PC-9 (cell line): ENCODE measurements at regions of chr13 and their contacts with region 1.

Region 1: GRCh38 chr13:79480954-79481684 is at the start of gene NDFIP2:
- DNase-seq: peak; percentile 86 to 94
- H3K4me3 ChIP-seq: peak within 1 kb of the TSS; percentile 91
- H3K27ac ChIP-seq: peak within 1 kb of the TSS; percentile 81
- H3K4me1 ChIP-seq: peaks cover 44% of the 10 kb centered on the region
- H3K27me3 ChIP-seq: no peaks in the 10 kb centered on the region
- CTCF ChIP-seq: no peak
- total RNA-seq, gene NDFIP2: 47.9 and 48.4 TPM in 2 replicates

Region 2: DNA sequence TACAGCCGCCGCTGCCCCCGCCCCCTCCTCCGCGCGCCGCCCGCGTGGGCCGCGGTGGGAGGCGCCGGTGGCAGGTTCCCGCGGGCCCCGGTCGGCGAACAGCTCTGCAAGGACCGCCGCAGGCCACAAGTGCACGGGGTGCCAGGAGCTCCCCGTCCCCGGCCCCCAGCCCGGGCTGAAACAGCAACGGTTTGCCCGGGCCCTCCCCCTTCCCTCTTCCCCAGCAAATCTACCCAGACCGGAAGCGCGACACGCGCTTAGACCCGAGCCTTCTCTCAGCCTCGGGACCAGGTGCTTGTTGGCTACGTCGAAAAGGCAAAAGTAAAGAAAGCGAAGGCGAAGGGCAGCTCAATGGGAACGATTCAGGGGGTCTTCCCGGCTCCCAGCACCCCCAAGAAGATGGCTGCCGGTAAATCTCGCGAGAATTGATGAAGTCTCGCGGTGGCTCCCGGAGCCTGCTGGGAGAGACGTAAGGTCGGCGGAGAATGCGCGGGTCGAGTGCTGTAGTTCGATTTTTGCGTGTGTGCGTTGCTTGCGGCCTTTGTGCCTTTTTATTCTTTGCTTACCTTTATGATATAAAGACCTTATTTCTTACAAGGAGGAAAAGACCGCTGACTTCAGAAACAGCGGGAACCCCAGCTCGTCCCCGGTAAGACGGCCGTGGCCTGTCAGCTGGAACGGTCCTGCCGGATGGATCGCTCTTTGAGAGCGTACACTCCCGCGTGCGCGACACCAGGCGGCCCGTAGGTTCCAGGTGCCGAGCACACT is 75.1 kb before region 1 on chr13 and contains the start of gene RBM26:
- CTCF ChIA-PET with region 1: no interaction called
- POLR2A ChIA-PET with region 1: no interaction called
- intact Hi-C with region 1: loop called (anchors 5 kb)
- DNase-seq: peak; percentile 81 to 89
- H3K4me3 ChIP-seq: peak within 1 kb of the TSS; percentile 90
- H3K27ac ChIP-seq: peak within 1 kb of the TSS; percentile 87
- H3K4me1 ChIP-seq: peaks cover 43% of the 10 kb centered on the region
- H3K27me3 ChIP-seq: no peaks in the 10 kb centered on the region
- CTCF ChIP-seq: no peak
- total RNA-seq, gene RBM26: 35.2 and 40.4 TPM in 2 replicates

Region 3: DNA sequence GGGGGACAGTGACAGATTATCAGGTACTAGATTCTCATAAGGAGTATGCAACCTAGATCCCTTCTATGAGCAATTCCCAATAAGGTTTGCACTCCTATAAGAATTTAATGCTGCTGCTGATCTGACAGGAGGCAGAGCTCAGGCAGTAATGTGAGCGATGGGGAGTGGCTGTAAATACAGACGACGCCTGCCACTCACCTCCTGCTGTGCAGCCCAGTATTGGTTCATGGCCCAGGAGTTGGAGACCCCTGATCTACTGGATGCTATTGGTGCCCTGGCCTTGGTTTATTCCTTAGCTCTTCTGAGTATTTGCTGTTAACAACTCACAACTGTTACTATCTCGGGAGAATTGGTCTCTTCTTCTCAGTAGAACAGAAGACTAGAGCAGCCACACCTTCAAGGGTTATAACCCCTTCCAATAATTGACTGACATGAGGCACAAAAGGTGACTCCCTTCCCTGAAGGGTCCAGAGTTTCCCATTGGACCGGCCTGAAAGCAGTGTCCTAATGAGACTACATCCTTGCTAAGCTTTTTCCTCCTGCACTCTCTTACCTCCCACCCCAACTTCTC is 40.1 kb before region 1 on chr13:
- CTCF ChIA-PET with region 1: no interaction called
- POLR2A ChIA-PET with region 1: interaction called, 6 read pairs
- intact Hi-C with region 1: loop called (anchors 1 kb)
- DNase-seq: no peak
- H3K4me3 ChIP-seq: no peak overlapping the region
- H3K27ac ChIP-seq: peak overlapping the region; percentile 58
- H3K4me1 ChIP-seq: peaks cover 19% of the 10 kb centered on the region
- H3K27me3 ChIP-seq: no peaks in the 10 kb centered on the region
- CTCF ChIP-seq: no peak

Region 4: GRCh38 chr13:79533781-79534400 is 52.8 kb after region 1 on chr13:
- CTCF ChIA-PET with region 1: interaction called, 3 read pairs
- POLR2A ChIA-PET with region 1: interaction called, 8 read pairs
- intact Hi-C with region 1: loop called (anchors 5 kb)
- DNase-seq: no peak
- H3K4me3 ChIP-seq: no peak overlapping the region
- H3K27ac ChIP-seq: no peak overlapping the region
- H3K4me1 ChIP-seq: no peaks in the 10 kb centered on the region
- H3K27me3 ChIP-seq: no peaks in the 10 kb centered on the region
- CTCF ChIP-seq: no peak

Region 5: GRCh38 chr13:79679334-79679733 is 198.2 kb after region 1 on chr13:
- CTCF ChIA-PET with region 1: interaction called, 3 read pairs
- POLR2A ChIA-PET with region 1: interaction called, 13 read pairs
- intact Hi-C with region 1: no loop called
- DNase-seq: peak; percentile 38 to 45
- H3K4me3 ChIP-seq: no peak overlapping the region
- H3K27ac ChIP-seq: no peak overlapping the region
- H3K4me1 ChIP-seq: peaks cover 16% of the 10 kb centered on the region
- H3K27me3 ChIP-seq: no peaks in the 10 kb centered on the region
- CTCF ChIP-seq: peak; percentile 88

Region 6: GRCh38 chr13:80389073-80390038 is 908.2 kb after region 1 on chr13:
- CTCF ChIA-PET with region 1: no interaction called
- POLR2A ChIA-PET with region 1: no interaction called
- intact Hi-C with region 1: no loop called
- DNase-seq: no peak
- H3K4me3 ChIP-seq: no peak overlapping the region
- H3K27ac ChIP-seq: no peak overlapping the region
- H3K4me1 ChIP-seq: no peaks in the 10 kb centered on the region
- H3K27me3 ChIP-seq: peaks cover 2% of the 10 kb centered on the region; the same call in 1 of the 2 replicates
- CTCF ChIP-seq: no peak